Caco-2 (cell line): ENCODE measurements at regions of chr1 and their contacts with region 1.

Region 1: GRCh38 chr1:167082511-167083027 is 7.6 kb downstream of the GPA33 start:
- DNase-seq: peak; percentile 66 to 88
- H3K4me3 ChIP-seq: no peak overlapping the region
- H3K4me3 Mint-ChIP-seq: no peak overlapping the region
- H3K27ac Mint-ChIP-seq: no peak overlapping the region
- H3K4me1 ChIP-seq: peaks cover 28% of the 10 kb centered on the region
- H3K4me1 Mint-ChIP-seq: no peaks in the 10 kb centered on the region
- H3K27me3 ChIP-seq: no peaks in the 10 kb centered on the region
- H3K27me3 Mint-ChIP-seq: no peaks in the 10 kb centered on the region
- CTCF ChIP-seq: no peak

Region 2: GRCh38 chr1:167105271-167106118 is 22.9 kb after region 1 on chr1:
- CTCF ChIA-PET with region 1: no interaction called
- POLR2A ChIA-PET with region 1: no interaction called
- intact Hi-C with region 1: loop called (anchors 2 kb)
- DNase-seq: peak in 1 of 2 experiments; percentile 21
- H3K4me3 ChIP-seq: no peak overlapping the region
- H3K4me3 Mint-ChIP-seq: peak overlapping the region; percentile 28
- H3K27ac Mint-ChIP-seq: no peak overlapping the region
- H3K4me1 ChIP-seq: peaks cover 10% of the 10 kb centered on the region; the same call in 1 of the 2 replicates
- H3K4me1 Mint-ChIP-seq: peaks cover 26% of the 10 kb centered on the region
- H3K27me3 ChIP-seq: no peaks in the 10 kb centered on the region
- H3K27me3 Mint-ChIP-seq: no peaks in the 10 kb centered on the region
- CTCF ChIP-seq: peak in 1 of 2 experiments; percentile 12